BJ (cell line): ENCODE measurements at regions of chr6 and their contacts with region 1.

Region 1: GRCh38 chr6:152821525-152821924 is 70.9 kb downstream of the VIP start:
- DNase-seq: no peak
- H3K4me3 ChIP-seq: no peak overlapping the region
- H3K27me3 ChIP-seq: no peaks in the 10 kb centered on the region
- CTCF ChIP-seq: no peak

Region 2: GRCh38 chr6:152804150-152804549 is 17.4 kb before region 1 on chr6:
- CTCF ChIA-PET with region 1: no interaction called
- POLR2A ChIA-PET with region 1: interaction called, 11 read pairs
- DNase-seq: no peak
- H3K4me3 ChIP-seq: no peak overlapping the region
- H3K27me3 ChIP-seq: no peaks in the 10 kb centered on the region
- CTCF ChIP-seq: no peak